Naive thymus-derived CD4-positive, alpha-beta T cell (primary cell): ENCODE measurements at regions of chr15 and their contacts with region 1.

Region 1: DNA sequence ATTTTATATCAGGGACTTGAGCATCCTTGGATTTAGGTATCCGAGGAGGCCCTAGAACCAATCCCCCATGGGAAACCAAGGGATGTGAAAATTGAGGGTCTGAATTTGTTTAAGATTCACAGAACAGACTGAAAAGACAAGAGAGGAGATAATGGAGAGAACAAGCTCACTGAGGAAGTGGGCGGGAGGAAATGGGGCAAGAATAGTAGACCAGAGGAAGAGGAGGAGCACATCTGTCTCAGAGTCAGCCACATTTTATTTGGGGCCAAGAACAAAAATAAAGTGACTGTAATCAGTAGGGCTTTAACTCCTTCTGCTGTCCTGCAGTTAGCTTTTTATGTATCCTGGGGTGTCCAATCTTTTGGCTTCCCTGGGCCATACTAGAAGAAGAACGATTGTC is 63.8 kb downstream of the BLM start:
- DNase-seq: peak in 4 of 9 donors; percentile 2 to 12 (median 10)
- ATAC-seq: no peak
- H3K4me3 ChIP-seq: no peak overlapping the region
- H3K4me3 Mint-ChIP-seq: peak overlapping the region; percentile 1 to 64 (median 46)
- H3K27ac ChIP-seq: no peak overlapping the region
- H3K27ac Mint-ChIP-seq: peak overlapping the region in 8 of 9 donors; percentile 1 to 71 (median 28)
- H3K4me1 ChIP-seq: peaks cover 6 to 8% of the 10 kb centered on the region in 2 donors
- H3K4me1 Mint-ChIP-seq: peaks cover 8 to 41% (median 16%) of the 10 kb centered on the region in 7 donors
- H3K27me3 ChIP-seq: no peaks in the 10 kb centered on the region
- H3K27me3 Mint-ChIP-seq: no peaks in the 10 kb centered on the region

Region 2: GRCh38 chr15:90729261-90729660 is 51.7 kb before region 1 on chr15:
- CTCF ChIA-PET with region 1: no interaction called
- POLR2A ChIA-PET with region 1: no interaction called
- intact Hi-C with region 1: loop called in 1 of 2 experiments (anchors 10 kb)
- DNase-seq: no peak
- ATAC-seq: no peak
- H3K4me3 ChIP-seq: no peak overlapping the region
- H3K4me3 Mint-ChIP-seq: no peak overlapping the region
- H3K27ac ChIP-seq: no peak overlapping the region
- H3K27ac Mint-ChIP-seq: no peak overlapping the region
- H3K4me1 ChIP-seq: no peaks in the 10 kb centered on the region
- H3K4me1 Mint-ChIP-seq: peaks cover 0 to 38% (median 0%) of the 10 kb centered on the region in 7 donors
- H3K27me3 ChIP-seq: no peaks in the 10 kb centered on the region
- H3K27me3 Mint-ChIP-seq: no peaks in the 10 kb centered on the region